CD4-positive, alpha-beta T cell (primary cell): ENCODE measurements at regions of chr1 and their contacts with region 1.

Region 1: GRCh38 chr1:43073490-43074230 is 98.4 kb downstream of the EBNA1BP2 start:
- DNase-seq: peak; percentile 60 to 87 (median 68)
- ATAC-seq: peak; percentile 84
- H3K4me3 ChIP-seq: no peak overlapping the region
- H3K4me3 Mint-ChIP-seq: no peak overlapping the region
- H3K27ac ChIP-seq: no peak overlapping the region
- H3K27ac Mint-ChIP-seq: no peak overlapping the region
- H3K4me1 ChIP-seq: peaks cover 6% of the 10 kb centered on the region
- H3K4me1 Mint-ChIP-seq: peaks cover 15% of the 10 kb centered on the region
- H3K27me3 ChIP-seq: no peaks in the 10 kb centered on the region
- H3K27me3 Mint-ChIP-seq: no peaks in the 10 kb centered on the region
- CTCF ChIP-seq: peak; percentile 82

Region 2: GRCh38 chr1:42777852-42778251 is 295.8 kb before region 1 on chr1:
- CTCF ChIA-PET with region 1: interaction called, 19 read pairs
- POLR2A ChIA-PET with region 1: no interaction called
- intact Hi-C with region 1: loop called (anchors 1 to 2 kb)
- DNase-seq: peak in 8 of 14 experiments; percentile 6 to 59 (median 25)
- ATAC-seq: peak; percentile 84
- H3K4me3 ChIP-seq: no peak overlapping the region
- H3K4me3 Mint-ChIP-seq: no peak overlapping the region
- H3K27ac ChIP-seq: no peak overlapping the region
- H3K27ac Mint-ChIP-seq: no peak overlapping the region
- H3K4me1 ChIP-seq: no peaks in the 10 kb centered on the region
- H3K4me1 Mint-ChIP-seq: peaks cover 6% of the 10 kb centered on the region
- H3K27me3 ChIP-seq: no peaks in the 10 kb centered on the region
- H3K27me3 Mint-ChIP-seq: no peaks in the 10 kb centered on the region
- CTCF ChIP-seq: peak; percentile 36

Region 3: GRCh38 chr1:43048601-43049011 is 25.1 kb before region 1 on chr1:
- CTCF ChIA-PET with region 1: no interaction called
- POLR2A ChIA-PET with region 1: no interaction called
- intact Hi-C with region 1: no loop called
- DNase-seq: no peak
- ATAC-seq: no peak
- H3K4me3 ChIP-seq: no peak overlapping the region
- H3K4me3 Mint-ChIP-seq: no peak overlapping the region
- H3K27ac ChIP-seq: no peak overlapping the region
- H3K27ac Mint-ChIP-seq: no peak overlapping the region
- H3K4me1 ChIP-seq: no peaks in the 10 kb centered on the region
- H3K4me1 Mint-ChIP-seq: no peaks in the 10 kb centered on the region
- H3K27me3 ChIP-seq: no peaks in the 10 kb centered on the region
- H3K27me3 Mint-ChIP-seq: no peaks in the 10 kb centered on the region
- CTCF ChIP-seq: no peak

Region 4: DNA sequence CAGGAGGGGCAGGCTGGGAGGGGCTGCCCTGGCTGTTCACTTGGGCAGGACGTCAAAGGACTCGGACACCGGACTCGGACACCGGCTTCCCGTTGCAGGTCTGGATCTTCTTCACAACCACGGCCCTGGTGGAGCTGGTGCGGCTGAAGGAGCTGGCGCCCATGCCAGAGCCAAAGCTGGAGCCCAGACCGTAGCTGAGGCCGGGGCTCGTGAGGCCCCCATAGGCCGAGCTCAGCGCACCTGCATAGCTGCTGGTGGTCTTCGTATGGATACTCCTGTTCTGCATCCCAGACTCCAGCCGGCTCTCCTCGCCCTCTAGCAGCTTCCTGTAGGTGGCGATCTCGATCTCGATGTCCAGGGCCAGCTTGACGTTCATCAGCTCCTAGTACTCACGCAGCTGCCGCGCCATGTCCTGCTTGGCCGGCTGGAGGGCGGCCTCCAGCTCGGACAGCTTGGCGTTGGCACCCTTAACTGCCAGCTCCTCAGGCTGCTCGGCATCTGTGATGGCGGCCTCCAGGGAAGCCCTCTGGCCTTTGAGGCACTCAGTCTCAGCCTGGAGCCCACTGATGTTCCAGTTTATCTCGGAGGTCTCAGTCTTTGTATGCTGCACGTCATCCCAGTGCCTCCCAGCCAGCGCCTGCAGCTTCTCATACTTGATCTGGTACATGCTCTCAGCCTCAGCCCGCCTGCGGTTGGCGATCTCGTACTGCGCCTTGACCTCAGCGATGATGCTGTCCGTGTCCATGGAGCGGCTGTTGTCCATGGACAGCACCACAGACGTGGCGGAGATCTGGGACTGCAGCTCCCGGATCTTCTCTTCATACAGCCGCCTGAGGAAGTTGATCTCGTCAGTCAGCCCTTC is 1029.8 kb after region 1 on chr1:
- CTCF ChIA-PET with region 1: no interaction called
- POLR2A ChIA-PET with region 1: no interaction called
- intact Hi-C with region 1: no loop called
- DNase-seq: no peak
- ATAC-seq: no peak
- H3K4me3 ChIP-seq: no peak overlapping the region
- H3K4me3 Mint-ChIP-seq: no peak overlapping the region
- H3K27ac ChIP-seq: no peak overlapping the region
- H3K27ac Mint-ChIP-seq: no peak overlapping the region
- H3K4me1 ChIP-seq: no peaks in the 10 kb centered on the region
- H3K4me1 Mint-ChIP-seq: no peaks in the 10 kb centered on the region
- H3K27me3 ChIP-seq: peaks cover 0 to 12% of the 10 kb centered on the region in 2 experiments
- H3K27me3 Mint-ChIP-seq: peaks cover 31% of the 10 kb centered on the region
- CTCF ChIP-seq: no peak